HEK293 (cell line): ENCODE measurements at regions of chr3 and their contacts with region 1.

Region 1: GRCh38 chr3:171566803-171567422 is 106.7 kb upstream of the TNIK start:
- H3K4me3 ChIP-seq: no peak overlapping the region
- H3K27ac ChIP-seq: no peak overlapping the region
- H3K4me1 ChIP-seq: peaks cover 4% of the 10 kb centered on the region
- CTCF ChIP-seq: no peak

Region 2: DNA sequence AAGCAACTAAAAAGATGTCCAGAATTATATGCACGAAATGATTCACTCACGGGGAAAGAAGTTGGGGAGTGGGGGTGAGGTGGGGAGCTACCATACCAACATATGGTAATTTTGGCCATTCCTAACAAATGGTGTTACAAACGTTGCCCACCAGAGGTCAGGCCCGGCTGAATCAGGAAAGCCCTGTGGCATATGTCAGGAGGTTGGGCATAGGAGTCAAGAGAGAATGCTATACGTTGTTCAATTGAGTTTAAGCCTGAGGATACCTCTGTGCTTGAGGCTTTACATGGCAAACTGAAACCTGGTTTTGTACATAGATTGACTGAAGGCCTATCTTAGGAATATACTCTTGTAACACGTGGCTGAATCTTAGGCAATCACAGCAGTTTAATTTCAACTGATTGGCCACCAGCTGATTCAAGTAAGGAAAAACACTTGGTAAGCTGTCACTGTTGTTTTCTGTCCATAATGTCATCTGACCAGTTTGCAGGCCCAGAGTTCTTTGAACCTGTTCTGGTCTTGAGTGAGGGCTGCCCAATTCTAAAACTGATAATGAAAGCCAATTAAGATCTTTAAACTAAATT is 517.0 kb before region 1 on chr3:
- CTCF ChIA-PET with region 1: interaction called, 10 read pairs
- POLR2A ChIA-PET with region 1: no interaction called
- H3K4me3 ChIP-seq: no peak overlapping the region
- H3K27ac ChIP-seq: no peak overlapping the region
- H3K4me1 ChIP-seq: no peaks in the 10 kb centered on the region
- CTCF ChIP-seq: peak; percentile 46